Activated T-helper 1 cell treated with anti-CD3 and anti-CD28 coated beads, Interleukin-12 subunit alpha, Interleukin-12 subunit beta, Interleukin-2, Interleukin-4 antibody, amounts not matched to agents 30 ng/mL and 10 ng/mL and 1 ng/mL, durations not matched to agents 14 hours and 24 hours and 36 hours (primary cell): ENCODE measurements at regions of chr19 and their contacts with region 1.

Region 1: GRCh38 chr19:28878862-28879566 is 333.9 kb downstream of the UQCRFS1 start:
- DNase-seq: peak; percentile 38
- H3K4me3 Mint-ChIP-seq: no peak overlapping the region
- H3K27ac Mint-ChIP-seq: no peak overlapping the region
- H3K4me1 Mint-ChIP-seq: no peaks in the 10 kb centered on the region
- H3K27me3 Mint-ChIP-seq: peaks cover 7% of the 10 kb centered on the region

Region 2: DNA sequence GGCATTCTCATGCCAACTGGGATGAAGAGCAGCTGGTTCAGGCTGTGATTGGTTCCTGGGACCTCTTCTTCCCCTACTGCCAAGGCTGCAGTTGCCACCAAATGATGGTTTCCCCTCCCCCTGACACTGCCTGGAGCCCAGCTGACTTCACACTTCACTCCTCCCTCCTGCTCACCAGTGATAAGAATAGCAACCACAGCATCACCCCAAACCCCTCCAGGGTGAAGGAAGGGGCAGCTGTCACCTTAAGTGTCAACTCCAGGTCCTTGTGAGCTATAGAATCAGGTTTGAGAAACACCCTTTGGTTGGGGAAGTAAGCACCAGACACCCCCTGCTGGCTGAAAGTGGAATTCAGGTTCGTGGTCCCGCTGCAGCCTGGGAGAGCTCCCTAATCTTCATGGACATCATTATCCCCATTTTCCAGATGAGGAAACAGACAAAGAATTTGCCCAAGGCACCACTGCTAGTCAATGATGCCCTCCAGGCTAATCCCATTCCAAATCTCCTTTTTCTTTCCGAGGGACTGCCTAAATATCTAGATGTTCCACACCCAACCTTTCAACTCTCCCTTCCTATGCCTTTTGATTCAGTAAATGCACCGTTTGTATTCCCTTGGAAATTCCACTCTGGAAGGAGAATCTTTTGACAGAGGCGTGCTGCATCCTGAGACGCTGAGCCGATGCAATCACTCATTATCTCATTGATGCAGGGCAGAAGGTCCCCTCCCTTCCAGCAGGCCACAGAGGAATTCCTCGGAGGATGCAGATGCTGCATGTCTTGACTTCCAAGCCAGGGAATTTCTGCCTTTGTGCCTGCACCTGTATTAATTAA is 384.5 kb after region 1 on chr19:
- intact Hi-C with region 1: loop called (anchors 1 kb)
- DNase-seq: peak; percentile 14
- H3K4me3 Mint-ChIP-seq: no peak overlapping the region
- H3K27ac Mint-ChIP-seq: no peak overlapping the region
- H3K4me1 Mint-ChIP-seq: peaks cover 4% of the 10 kb centered on the region
- H3K27me3 Mint-ChIP-seq: peaks cover 14% of the 10 kb centered on the region